ENCODE measurements at regions of chr2 and their contacts with region 1.

Region 1: GRCh38 chr2:144516981-144517865 is 2.7 kb downstream of the ZEB2 start:
- DNase-seq: peak in 4 of 10 donors; percentile 40 to 69 (median 61)
- H3K4me3 ChIP-seq: peak overlapping the region; percentile 57 to 100 (median 85)
- H3K27ac ChIP-seq: peak overlapping the region; percentile 95 to 100 (median 100)
- H3K27me3 ChIP-seq: no peaks in the 10 kb centered on the region
- CTCF ChIP-seq: peak in 3 of 56 donors; percentile 11 to 12 (median 11)

Region 2: DNA sequence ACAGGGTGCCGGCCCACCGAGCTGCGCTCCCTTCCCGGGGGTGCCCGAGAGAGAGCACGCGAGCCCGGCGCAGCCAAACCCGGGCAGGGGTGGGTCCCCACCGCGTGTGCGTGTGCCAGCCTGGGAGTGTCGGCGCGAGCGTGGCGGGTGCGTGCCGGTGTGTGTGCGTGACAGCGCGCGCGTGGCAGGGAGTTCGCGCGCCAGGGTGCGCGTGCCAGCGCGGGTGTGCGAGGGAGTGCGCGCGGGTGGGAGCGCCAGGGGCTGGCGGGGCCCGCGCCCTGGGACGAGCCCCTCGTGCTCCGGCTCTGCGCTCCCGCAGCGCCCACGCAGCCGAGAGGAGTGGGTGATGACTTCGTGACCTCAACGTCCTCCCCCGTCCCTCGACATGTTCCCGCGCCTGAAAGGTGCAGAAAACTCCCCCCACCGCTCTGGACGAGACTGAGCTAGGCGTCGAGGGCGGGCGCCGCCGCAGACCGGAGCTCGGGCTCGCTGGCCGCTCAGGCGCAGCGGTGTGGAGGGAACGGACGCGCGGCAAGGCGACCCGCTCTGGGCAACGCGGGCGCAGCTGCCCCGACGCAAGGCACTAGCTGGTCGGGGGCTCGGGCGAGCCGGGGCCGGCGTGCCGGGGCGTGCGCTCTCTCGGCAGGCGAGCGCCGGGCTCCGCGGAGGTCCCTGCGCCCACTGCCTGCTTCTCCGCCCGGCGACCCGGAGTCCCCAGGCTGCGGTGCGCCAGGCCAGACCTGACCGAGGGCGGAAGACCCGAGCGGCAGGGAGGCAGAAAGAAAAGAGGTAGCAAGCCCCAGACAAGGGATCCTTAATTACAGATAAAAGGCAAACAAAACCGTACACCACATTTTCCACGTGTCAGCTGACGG is 580.1 kb before region 1 on chr2:
- intact Hi-C with region 1: loop called in 1 of 2 experiments (anchors 5 kb)
- DNase-seq: peak in 9 of 10 donors; percentile 8 to 73 (median 60)
- H3K4me3 ChIP-seq: peak overlapping the region; percentile 48 to 78 (median 68)
- H3K27ac ChIP-seq: peak overlapping the region in 58 of 59 donors; percentile 3 to 96 (median 84)
- H3K27me3 ChIP-seq: no peaks in the 10 kb centered on the region
- CTCF ChIP-seq: peak in 1 of 56 donors; percentile 10

Region 3: GRCh38 chr2:144304202-144304601 is 213.0 kb before region 1 on chr2:
- intact Hi-C with region 1: no loop called
- DNase-seq: no peak
- H3K4me3 ChIP-seq: no peak overlapping the region
- H3K27ac ChIP-seq: no peak overlapping the region
- H3K27me3 ChIP-seq: no peaks in the 10 kb centered on the region
- CTCF ChIP-seq: no peak

Region 4: GRCh38 chr2:144454466-144455287 is 62.5 kb before region 1 on chr2:
- intact Hi-C with region 1: loop called in 1 of 2 experiments (anchors 2 kb)
- DNase-seq: no peak
- H3K4me3 ChIP-seq: peak overlapping the region in 56 of 59 donors; percentile 0 to 61 (median 36)
- H3K27ac ChIP-seq: peak overlapping the region; percentile 69 to 99 (median 96)
- H3K27me3 ChIP-seq: no peaks in the 10 kb centered on the region
- CTCF ChIP-seq: no peak

Region 5: GRCh38 chr2:144703852-144704708 is 186.9 kb after region 1 on chr2:
- intact Hi-C with region 1: loop called in 1 of 2 experiments (anchors 2 kb)
- DNase-seq: no peak
- H3K4me3 ChIP-seq: no peak overlapping the region
- H3K27ac ChIP-seq: no peak overlapping the region
- H3K27me3 ChIP-seq: no peaks in the 10 kb centered on the region
- CTCF ChIP-seq: no peak

Region 6: GRCh38 chr2:145049475-145049874 is 532.3 kb after region 1 on chr2:
- intact Hi-C with region 1: loop called in 1 of 2 experiments (anchors 5 kb)
- DNase-seq: no peak
- H3K4me3 ChIP-seq: no peak overlapping the region
- H3K27ac ChIP-seq: peak overlapping the region in 15 of 59 donors; percentile 3 to 47 (median 29)
- H3K27me3 ChIP-seq: no peaks in the 10 kb centered on the region
- CTCF ChIP-seq: no peak

Region 7: DNA sequence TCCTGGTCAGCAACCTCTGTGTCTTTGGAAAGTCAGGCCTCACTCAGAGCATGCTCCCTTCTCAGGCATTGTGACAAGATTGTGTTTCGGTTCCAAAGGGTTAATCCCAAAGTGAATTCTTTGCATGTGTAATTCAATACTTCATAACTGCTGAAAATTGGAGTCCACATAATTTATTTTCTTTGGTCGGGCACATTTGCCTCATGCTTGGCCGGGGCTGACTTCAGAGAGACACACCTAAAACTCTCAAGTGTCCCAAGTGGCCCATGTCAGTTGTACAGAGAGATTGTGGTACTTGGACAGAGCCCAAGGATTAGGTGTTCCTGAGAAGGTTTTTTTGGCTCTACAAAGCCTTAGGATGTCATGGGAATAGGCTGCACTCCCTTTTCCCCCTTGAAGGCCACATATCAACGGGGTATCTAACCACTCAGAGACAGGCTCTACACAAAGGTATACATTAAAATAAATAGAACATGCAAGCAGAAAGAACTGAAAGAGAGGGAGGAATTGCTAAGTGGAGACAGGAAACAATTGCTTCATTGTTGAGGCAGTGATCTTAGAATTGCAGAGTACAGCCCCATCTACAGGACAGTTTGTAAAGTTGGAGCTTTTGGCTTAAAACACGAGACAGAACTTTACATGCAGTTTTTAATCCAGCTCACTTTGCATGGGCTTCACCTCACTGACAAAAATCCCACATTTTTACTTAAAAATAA is 1235.0 kb after region 1 on chr2:
- intact Hi-C with region 1: loop called in 1 of 2 experiments (anchors 10 kb)
- DNase-seq: peak in 1 of 10 donors; percentile 14
- H3K4me3 ChIP-seq: peak overlapping the region in 44 of 59 donors; percentile 2 to 52 (median 31)
- H3K27ac ChIP-seq: peak overlapping the region in 56 of 59 donors; percentile 3 to 86 (median 68)
- H3K27me3 ChIP-seq: no peaks in the 10 kb centered on the region
- CTCF ChIP-seq: peak; percentile 60 to 90 (median 82)

Measured in dorsolateral prefrontal cortex (tissue), 120 donors.